Dendritic cell treated with granulocyte-macrophage colony-stimulating factor and Interleukin-4, amounts not matched to agents 40 ng/mL and 50 ng/mL, for 4 days (primary cell): ENCODE measurements at regions of chr10 and their contacts with region 1.

Region 1: DNA sequence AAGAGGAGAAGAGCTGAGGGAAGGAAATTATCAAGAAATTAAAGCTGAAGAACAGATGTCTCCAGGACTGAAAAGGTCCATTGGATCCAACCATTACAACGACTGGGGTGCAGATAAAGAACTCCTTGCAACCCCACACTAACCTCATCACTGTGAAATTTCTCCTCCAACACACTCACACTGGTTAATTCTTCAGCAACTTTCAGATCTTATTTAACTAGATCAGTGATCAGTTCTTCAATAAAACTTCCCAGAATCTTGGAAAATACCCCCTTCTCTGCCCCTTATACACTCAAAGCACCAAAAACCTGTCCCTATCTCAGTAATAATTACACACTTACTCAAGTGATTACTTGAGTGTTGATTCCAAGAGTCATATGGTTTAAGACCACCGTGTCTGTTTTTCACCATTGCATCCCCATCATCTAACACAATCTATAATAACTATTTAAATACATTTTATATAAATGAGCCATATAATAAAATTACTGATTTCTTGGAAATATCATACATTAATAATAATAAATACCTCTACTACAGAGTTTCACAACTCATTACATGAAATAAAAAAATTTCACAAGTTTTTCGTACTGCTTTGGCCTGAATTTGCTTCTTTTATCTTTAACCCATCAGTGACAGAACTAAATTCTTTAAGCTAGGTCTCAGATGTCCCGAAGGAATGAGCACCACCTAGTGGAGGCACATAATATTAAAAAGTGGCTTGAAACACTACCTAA is 123.7 kb downstream of the MPP7 start:
- H3K4me3 Mint-ChIP-seq: no peak overlapping the region
- H3K27ac Mint-ChIP-seq: peak overlapping the region; percentile 86
- H3K4me1 Mint-ChIP-seq: peaks cover 18% of the 10 kb centered on the region
- H3K27me3 Mint-ChIP-seq: no peaks in the 10 kb centered on the region

Region 2: GRCh38 chr10:27369880-27370279 is 809.3 kb before region 1 on chr10:
- intact Hi-C with region 1: loop called (anchors 5 kb)
- H3K4me3 Mint-ChIP-seq: no peak overlapping the region
- H3K27ac Mint-ChIP-seq: no peak overlapping the region
- H3K4me1 Mint-ChIP-seq: no peaks in the 10 kb centered on the region
- H3K27me3 Mint-ChIP-seq: peaks cover 3% of the 10 kb centered on the region

Region 3: DNA sequence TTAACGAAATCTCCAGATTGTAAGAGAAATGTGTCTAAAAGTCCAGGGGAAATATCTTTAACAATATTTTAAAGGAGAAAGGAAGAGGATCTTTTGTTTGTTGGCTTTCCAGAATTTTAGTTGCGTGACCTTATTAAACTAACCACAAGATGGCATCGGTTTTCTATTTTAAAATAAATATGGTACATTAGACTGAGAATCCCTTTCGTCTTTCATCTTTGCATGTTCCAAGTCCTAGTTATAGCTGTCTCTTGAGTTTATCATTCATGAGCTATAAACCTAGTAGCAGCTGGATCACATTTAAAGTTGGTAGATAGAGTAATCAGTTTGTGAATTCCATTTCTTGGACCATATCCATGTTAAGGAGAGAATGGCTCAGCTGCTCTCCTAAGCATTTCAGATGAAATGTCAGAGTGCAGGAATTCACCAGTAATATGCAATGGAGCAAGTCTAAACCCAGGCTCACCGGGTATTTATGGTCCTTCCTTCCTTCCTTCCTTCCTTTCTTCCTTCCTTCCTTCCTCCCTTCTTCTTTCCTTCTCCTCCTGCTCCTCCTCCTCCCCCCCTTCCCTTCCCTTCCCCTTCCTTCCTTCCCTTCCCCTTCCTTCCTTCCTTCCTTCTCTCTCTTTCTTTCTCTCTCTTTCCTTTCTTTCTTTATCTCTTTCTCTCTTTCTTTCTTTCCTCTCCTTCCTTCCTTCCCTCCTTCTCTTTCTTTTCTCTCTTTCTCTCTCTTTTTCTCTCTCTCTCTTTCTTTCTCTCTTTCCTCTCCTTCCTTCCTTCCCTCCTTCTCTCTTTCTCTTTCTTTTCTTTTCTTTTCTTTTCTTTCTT is 732.9 kb before region 1 on chr10:
- intact Hi-C with region 1: loop called (anchors 5 kb)
- H3K4me3 Mint-ChIP-seq: no peak overlapping the region
- H3K27ac Mint-ChIP-seq: peak overlapping the region; percentile 47
- H3K4me1 Mint-ChIP-seq: peaks cover 17% of the 10 kb centered on the region
- H3K27me3 Mint-ChIP-seq: no peaks in the 10 kb centered on the region

Region 4: DNA sequence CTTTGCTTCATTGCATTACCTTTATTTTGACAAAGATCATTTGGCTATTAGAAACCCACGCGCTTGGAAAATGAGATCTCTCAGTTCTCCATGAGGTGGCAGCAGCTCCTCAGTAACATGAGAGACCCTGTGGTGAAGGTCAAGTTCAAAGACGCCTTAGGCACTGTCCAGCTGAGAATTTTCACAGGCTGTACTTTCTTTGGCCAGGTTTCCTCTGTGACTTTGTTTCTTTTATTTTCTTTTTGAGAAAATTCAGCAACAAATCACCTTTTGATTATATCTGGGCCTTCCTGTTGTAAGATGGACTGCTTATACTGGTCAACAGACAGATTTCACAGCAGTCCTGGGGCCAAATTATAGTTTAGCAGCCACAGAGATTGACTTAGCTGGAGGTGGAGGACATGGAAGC is 620.6 kb before region 1 on chr10:
- intact Hi-C with region 1: loop called (anchors 5 kb)
- H3K4me3 Mint-ChIP-seq: no peak overlapping the region
- H3K27ac Mint-ChIP-seq: no peak overlapping the region
- H3K4me1 Mint-ChIP-seq: no peaks in the 10 kb centered on the region
- H3K27me3 Mint-ChIP-seq: peaks cover 2% of the 10 kb centered on the region

Region 5: GRCh38 chr10:27742195-27743011 is 436.8 kb before region 1 on chr10:
- intact Hi-C with region 1: loop called (anchors 1 kb)
- H3K4me3 Mint-ChIP-seq: peak overlapping the region; percentile 78
- H3K27ac Mint-ChIP-seq: no peak overlapping the region
- H3K4me1 Mint-ChIP-seq: peaks cover 53% of the 10 kb centered on the region
- H3K27me3 Mint-ChIP-seq: peaks cover 76% of the 10 kb centered on the region

Region 6: DNA sequence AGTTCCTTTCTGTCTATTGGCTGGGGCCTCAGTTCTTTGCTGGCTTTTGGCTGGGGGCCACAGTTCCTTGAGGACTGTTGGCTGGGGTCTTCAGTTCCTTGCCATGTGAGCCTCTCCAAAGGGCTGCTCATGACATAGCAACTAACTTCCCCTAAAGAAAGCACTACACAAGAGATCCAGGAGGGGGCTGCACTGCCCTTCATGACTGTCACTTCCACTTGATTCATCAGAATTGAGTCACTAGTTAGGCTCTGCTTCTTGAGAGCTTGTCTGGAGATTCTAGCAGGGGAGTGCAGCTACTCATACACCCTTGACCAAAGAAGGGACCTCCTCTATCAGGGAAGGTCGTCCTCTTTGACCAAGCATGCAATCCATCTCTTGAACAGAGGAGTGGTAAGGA is 395.5 kb before region 1 on chr10:
- intact Hi-C with region 1: loop called (anchors 1 kb)
- H3K4me3 Mint-ChIP-seq: no peak overlapping the region
- H3K27ac Mint-ChIP-seq: no peak overlapping the region
- H3K4me1 Mint-ChIP-seq: no peaks in the 10 kb centered on the region
- H3K27me3 Mint-ChIP-seq: peaks cover 7% of the 10 kb centered on the region

Region 7: GRCh38 chr10:28381903-28382347 is 202.8 kb after region 1 on chr10:
- intact Hi-C with region 1: loop called (anchors 10 kb)
- H3K4me3 Mint-ChIP-seq: no peak overlapping the region
- H3K27ac Mint-ChIP-seq: no peak overlapping the region
- H3K4me1 Mint-ChIP-seq: peaks cover 49% of the 10 kb centered on the region
- H3K27me3 Mint-ChIP-seq: peaks cover 5% of the 10 kb centered on the region